Ovary (tissue), 10 donors: ENCODE measurements at regions of chr12 and their contacts with region 1.

Region 1: DNA sequence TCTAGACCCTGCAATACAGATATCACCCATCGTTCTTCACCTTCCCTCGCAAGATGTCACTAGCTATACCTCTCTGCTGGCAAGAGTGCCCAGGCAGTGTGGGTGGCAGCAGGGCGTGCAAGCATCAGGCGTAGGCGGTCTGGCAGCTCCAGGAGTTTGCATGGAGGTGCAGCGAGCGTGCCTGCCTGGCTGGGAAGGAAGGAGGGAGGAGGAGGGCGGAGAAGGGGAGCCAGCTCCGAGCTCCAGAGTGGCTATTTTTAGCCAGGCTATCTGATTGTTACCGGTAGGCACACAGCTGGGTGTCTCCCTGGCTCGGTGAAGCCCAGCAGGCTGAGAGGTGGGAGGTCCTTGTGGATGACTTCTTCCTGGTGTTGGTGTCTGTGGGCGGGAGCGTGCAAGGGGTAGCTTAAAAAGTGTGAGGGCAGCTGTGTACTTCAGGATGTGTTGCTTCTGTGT is 6.2 kb downstream of the FOXJ2 start:
- DNase-seq: peak in 1 of 5 donors; percentile 49
- H3K4me3 ChIP-seq: peak overlapping the region; percentile 4
- H3K27ac ChIP-seq: no peak overlapping the region
- H3K4me1 ChIP-seq: peaks cover 22% of the 10 kb centered on the region
- H3K27me3 ChIP-seq: no peaks in the 10 kb centered on the region
- CTCF ChIP-seq: no peak
- EP300 ChIP-seq: no peak
- POLR2A ChIP-seq: no peak

Region 2: GRCh38 chr12:8078398-8078797 is 39.7 kb after region 1 on chr12:
- intact Hi-C with region 1: loop called in 1 of 4 experiments (anchors 5 kb)
- DNase-seq: peak in 2 of 5 donors; percentile 19 to 31
- H3K4me3 ChIP-seq: no peak overlapping the region
- H3K27ac ChIP-seq: no peak overlapping the region
- H3K4me1 ChIP-seq: peaks cover 1% of the 10 kb centered on the region
- H3K27me3 ChIP-seq: no peaks in the 10 kb centered on the region
- CTCF ChIP-seq: no peak
- EP300 ChIP-seq: no peak
- POLR2A ChIP-seq: no peak

Region 3: DNA sequence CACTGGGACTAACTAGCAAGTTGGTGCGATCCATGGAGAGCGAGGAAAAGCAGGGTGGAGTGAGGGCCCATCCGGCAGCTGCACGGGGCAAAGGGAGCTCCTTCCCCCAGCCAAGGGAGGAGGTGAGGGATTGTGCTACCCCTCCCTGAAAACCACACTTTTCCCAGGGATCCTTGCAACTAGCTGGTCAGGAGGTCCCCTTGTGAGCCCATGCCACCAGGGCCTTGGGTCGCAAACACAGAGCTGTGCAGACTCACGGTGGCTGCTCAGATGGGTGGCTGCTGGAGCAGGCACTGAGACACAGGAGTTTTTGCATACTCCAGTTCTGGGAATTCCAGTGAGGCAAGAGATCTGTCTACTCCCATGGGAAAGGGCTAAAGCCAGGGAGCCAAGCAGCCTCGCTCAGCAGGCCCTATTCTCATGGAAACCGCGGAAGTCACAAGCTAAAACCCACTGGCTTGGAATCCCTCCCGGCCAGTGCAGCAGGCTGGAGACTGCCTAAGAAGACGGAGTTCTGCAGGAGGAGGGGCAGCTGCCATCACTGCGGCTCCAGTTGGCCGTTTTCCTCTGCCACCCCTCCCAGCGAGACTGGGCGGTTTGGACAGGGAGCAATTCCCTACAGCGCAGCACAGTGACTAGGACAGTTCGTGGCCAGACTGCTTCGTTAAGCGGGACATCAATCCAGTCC is 107.2 kb after region 1 on chr12:
- intact Hi-C with region 1: no loop called
- DNase-seq: peak in 2 of 5 donors; percentile 21 to 38
- H3K4me3 ChIP-seq: no peak overlapping the region
- H3K27ac ChIP-seq: no peak overlapping the region
- H3K4me1 ChIP-seq: no peaks in the 10 kb centered on the region
- H3K27me3 ChIP-seq: no peaks in the 10 kb centered on the region
- CTCF ChIP-seq: no peak
- EP300 ChIP-seq: no peak
- POLR2A ChIP-seq: no peak